Sigmoid colon (tissue), 7 donors: ENCODE measurements at regions of chr1 and their contacts with region 1.

Region 1: DNA sequence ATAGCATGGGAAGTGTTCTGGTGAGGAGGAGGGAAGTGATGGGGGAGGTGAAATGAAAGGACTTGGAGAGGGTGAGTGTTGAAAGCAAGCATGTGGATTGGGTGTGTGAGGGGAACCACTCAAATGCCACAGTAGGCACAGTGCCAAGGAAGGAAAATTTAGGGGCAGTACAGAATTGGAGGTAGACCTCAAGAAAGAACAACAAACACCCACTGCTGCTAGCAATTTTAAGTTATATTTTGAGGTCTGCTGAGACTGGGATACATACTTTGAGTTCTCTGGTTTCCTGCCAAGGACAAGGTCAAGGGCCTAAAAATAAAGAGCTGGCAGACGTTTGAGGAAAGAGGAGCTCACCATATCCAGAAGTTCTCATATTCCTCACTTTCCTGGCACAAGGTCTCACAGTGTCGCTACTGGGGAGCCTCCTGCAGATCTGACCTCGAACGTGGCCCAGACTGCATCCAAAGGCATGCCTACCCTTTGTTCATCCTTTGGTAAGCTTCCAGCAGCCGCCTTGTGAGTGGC is 104.0 kb downstream of the BRINP2 start:
- DNase-seq: peak; percentile 75
- H3K4me3 ChIP-seq: no peak overlapping the region
- H3K27ac ChIP-seq: peak overlapping the region; percentile 32 to 77 (median 63)
- H3K4me1 ChIP-seq: peaks cover 0 to 47% (median 29%) of the 10 kb centered on the region in 4 donors
- H3K27me3 ChIP-seq: no peaks in the 10 kb centered on the region
- CTCF ChIP-seq: no peak
- EP300 ChIP-seq: no peak
- POLR2A ChIP-seq: no peak

Region 2: GRCh38 chr1:177170756-177171535 is 103.8 kb before region 1 on chr1 and contains the start of gene BRINP2:
- intact Hi-C with region 1: no loop called
- DNase-seq: no peak
- H3K4me3 ChIP-seq: peak within 1 kb of the TSS in 3 of 4 donors; percentile 6 to 42 (median 38)
- H3K27ac ChIP-seq: no peak within 1 kb of the TSS
- H3K4me1 ChIP-seq: peaks cover 0 to 14% (median 13%) of the 10 kb centered on the region in 4 donors
- H3K27me3 ChIP-seq: peaks cover 3 to 88% (median 25%) of the 10 kb centered on the region in 3 donors
- CTCF ChIP-seq: no peak
- EP300 ChIP-seq: no peak
- POLR2A ChIP-seq: no peak
- total RNA-seq, gene BRINP2: 0.14 to 1.4 TPM in 2 of 4 donors, not detected in the others

Region 3: GRCh38 chr1:177209357-177209756 is 65.4 kb before region 1 on chr1:
- intact Hi-C with region 1: no loop called
- DNase-seq: peak; percentile 90
- H3K4me3 ChIP-seq: no peak overlapping the region
- H3K27ac ChIP-seq: peak overlapping the region in 3 of 4 donors; percentile 32 to 44 (median 35)
- H3K4me1 ChIP-seq: peaks cover 0 to 38% (median 25%) of the 10 kb centered on the region in 4 donors
- H3K27me3 ChIP-seq: no peaks in the 10 kb centered on the region
- CTCF ChIP-seq: no peak
- EP300 ChIP-seq: peak in 2 of 4 donors; percentile 66 to 82
- POLR2A ChIP-seq: no peak

Region 4: GRCh38 chr1:177340601-177341067 is 65.9 kb after region 1 on chr1:
- intact Hi-C with region 1: loop called (anchors 2 kb)
- DNase-seq: no peak
- H3K4me3 ChIP-seq: no peak overlapping the region
- H3K27ac ChIP-seq: peak overlapping the region in 2 of 4 donors; percentile 38 to 65
- H3K4me1 ChIP-seq: peaks cover 0 to 33% (median 25%) of the 10 kb centered on the region in 4 donors
- H3K27me3 ChIP-seq: no peaks in the 10 kb centered on the region
- CTCF ChIP-seq: no peak
- EP300 ChIP-seq: no peak
- POLR2A ChIP-seq: no peak